Activated B cell treated with CpG ODN at 0.5 μM for 24 hours (primary cell): ENCODE measurements at regions of chr9 and their contacts with region 1.

Region 1: GRCh38 chr9:124197177-124198095 is 60.3 kb upstream of the NEK6 start:
- DNase-seq: peak; percentile 47
- ATAC-seq: peak; percentile 86
- H3K4me3 Mint-ChIP-seq: peak overlapping the region; percentile 72
- H3K27ac Mint-ChIP-seq: peak overlapping the region; percentile 96
- H3K4me1 Mint-ChIP-seq: peaks cover 65% of the 10 kb centered on the region
- H3K27me3 Mint-ChIP-seq: no peaks in the 10 kb centered on the region
- CTCF ChIP-seq: no peak

Region 2: DNA sequence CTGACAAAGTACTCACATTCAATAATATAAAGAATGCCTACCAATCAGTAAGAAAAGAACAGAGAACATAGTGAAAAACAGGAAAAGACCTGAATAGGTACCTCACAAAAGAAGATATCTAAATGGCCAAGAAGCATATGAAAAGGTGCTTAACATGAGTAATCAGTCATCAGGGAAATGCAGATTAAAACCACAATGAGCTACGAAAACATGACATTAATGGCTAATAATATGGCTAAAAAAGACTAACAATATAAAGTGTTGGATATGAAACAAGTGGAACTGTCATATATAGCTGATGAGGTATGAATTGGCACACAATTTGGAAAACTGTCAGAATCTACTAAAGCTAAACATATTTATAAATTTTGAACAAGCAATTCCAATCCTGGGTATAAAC is 286.4 kb before region 1 on chr9:
- CTCF ChIA-PET with region 1: no interaction called
- POLR2A ChIA-PET with region 1: no interaction called
- intact Hi-C with region 1: no loop called
- DNase-seq: no peak
- ATAC-seq: no peak
- H3K4me3 Mint-ChIP-seq: no peak overlapping the region
- H3K27ac Mint-ChIP-seq: no peak overlapping the region
- H3K4me1 Mint-ChIP-seq: no peaks in the 10 kb centered on the region
- H3K27me3 Mint-ChIP-seq: no peaks in the 10 kb centered on the region
- CTCF ChIP-seq: no peak

Region 3: GRCh38 chr9:124137009-124137943 is 60.2 kb before region 1 on chr9:
- CTCF ChIA-PET with region 1: interaction called, 11 read pairs
- POLR2A ChIA-PET with region 1: interaction called, 6 read pairs
- intact Hi-C with region 1: loop called (anchors 2 kb)
- DNase-seq: no peak
- ATAC-seq: peak; percentile 83
- H3K4me3 Mint-ChIP-seq: peak overlapping the region; percentile 67
- H3K27ac Mint-ChIP-seq: peak overlapping the region; percentile 80
- H3K4me1 Mint-ChIP-seq: peaks cover 28% of the 10 kb centered on the region
- H3K27me3 Mint-ChIP-seq: no peaks in the 10 kb centered on the region
- CTCF ChIP-seq: no peak

Region 4: GRCh38 chr9:124257844-124258606 is 60.6 kb after region 1 on chr9 and contains the start of gene NEK6:
- CTCF ChIA-PET with region 1: interaction called, 8 read pairs
- POLR2A ChIA-PET with region 1: interaction called, 10 read pairs
- intact Hi-C with region 1: loop called (anchors 1 kb)
- DNase-seq: peak; percentile 56
- ATAC-seq: peak; percentile 41
- H3K4me3 Mint-ChIP-seq: peak within 1 kb of the TSS; percentile 96
- H3K27ac Mint-ChIP-seq: peak within 1 kb of the TSS; percentile 94
- H3K4me1 Mint-ChIP-seq: peaks cover 87% of the 10 kb centered on the region
- H3K27me3 Mint-ChIP-seq: no peaks in the 10 kb centered on the region
- CTCF ChIP-seq: no peak
- total RNA-seq, gene NEK6: 110 and 115 TPM in 2 replicates

Region 5: GRCh38 chr9:124285903-124286291 is 88.5 kb after region 1 on chr9:
- CTCF ChIA-PET with region 1: interaction called, 6 read pairs
- POLR2A ChIA-PET with region 1: interaction called, 12 read pairs
- intact Hi-C with region 1: loop called (anchors 1 kb)
- DNase-seq: no peak
- ATAC-seq: peak; percentile 25
- H3K4me3 Mint-ChIP-seq: peak overlapping the region; percentile 84
- H3K27ac Mint-ChIP-seq: peak overlapping the region; percentile 99
- H3K4me1 Mint-ChIP-seq: peaks cover 95% of the 10 kb centered on the region
- H3K27me3 Mint-ChIP-seq: no peaks in the 10 kb centered on the region
- CTCF ChIP-seq: no peak

Region 6: DNA sequence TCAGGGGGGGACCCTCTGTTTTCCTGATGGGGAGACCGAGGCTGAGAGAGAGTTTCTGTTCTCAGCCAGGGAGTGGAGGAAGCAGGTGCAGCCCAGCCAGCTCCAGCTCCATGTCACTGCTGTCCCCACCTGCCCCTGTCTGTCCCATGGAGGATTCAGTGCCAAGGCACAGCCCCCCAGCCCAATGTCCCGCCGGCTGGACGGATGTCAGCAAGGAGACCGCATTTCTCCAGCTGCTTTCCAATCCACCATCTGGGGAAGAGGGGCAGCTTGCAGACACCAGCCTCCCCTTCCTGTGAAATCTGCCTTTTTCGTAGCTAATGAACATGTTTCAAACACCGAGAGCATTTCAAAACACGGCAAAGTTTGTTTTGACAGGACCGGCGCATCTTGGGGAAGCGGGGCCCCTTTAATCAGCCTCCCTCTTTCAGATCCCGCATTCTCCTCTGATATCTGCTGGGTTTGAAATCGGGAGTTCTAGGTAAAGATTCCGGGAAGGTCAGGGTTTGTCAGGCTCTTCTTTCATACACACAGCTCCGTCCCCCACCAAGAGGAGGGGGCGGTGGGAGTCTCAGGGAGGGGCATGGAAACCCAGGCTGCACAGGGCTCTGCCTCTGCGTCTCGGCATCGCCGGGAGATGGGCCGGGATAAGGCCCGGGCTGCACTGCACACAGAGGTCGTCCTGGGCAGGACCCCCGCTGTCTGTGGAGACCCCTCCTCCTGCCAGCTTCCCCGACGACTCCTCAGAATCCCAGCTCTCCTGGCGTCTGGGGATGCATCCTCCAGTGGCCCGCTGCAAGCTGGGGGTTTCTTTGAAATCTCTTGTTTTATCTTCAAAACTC is 135.1 kb after region 1 on chr9:
- CTCF ChIA-PET with region 1: no interaction called
- POLR2A ChIA-PET with region 1: no interaction called
- intact Hi-C with region 1: no loop called
- DNase-seq: no peak
- ATAC-seq: no peak
- H3K4me3 Mint-ChIP-seq: no peak overlapping the region
- H3K27ac Mint-ChIP-seq: peak overlapping the region; percentile 18
- H3K4me1 Mint-ChIP-seq: no peaks in the 10 kb centered on the region
- H3K27me3 Mint-ChIP-seq: no peaks in the 10 kb centered on the region
- CTCF ChIP-seq: no peak